ENCODE measurements at regions of chr6 and their contacts with region 1.

Region 1: DNA sequence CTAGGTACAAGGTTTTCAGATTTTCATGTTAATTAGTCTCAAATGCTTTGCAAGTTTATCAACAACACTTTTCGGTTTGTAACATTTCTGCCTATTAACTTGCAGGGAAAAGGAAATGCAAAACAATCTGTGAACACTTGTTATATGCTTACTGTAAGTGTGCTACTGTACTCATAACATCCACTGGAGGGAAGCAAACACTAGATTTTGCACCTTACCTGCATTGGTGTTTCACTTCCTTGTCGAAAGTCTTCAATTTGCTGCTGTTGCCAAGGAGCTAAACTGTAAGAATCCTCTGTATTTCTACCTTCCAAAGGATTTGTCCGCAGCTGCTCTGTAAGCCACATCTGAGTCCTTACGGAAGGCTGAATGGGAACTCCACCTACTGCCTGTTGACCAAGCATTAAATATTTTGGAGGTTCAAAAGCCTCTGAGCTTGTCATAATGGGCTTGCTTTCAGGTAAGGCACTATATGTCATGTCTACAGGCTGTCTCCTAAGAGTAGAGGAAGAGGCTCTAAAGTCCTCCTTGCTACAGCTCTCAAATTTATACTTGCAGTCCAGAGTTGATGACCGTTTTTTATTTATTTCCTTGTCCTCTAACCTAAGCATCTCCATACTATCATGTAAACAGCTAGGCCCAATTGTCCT is 17.3 kb downstream of the PLN start:
- DNase-seq: peak; percentile 39
- ATAC-seq: peak; percentile 82
- H3K4me3 ChIP-seq: no peak overlapping the region
- H3K27ac ChIP-seq: no peak overlapping the region
- H3K4me1 ChIP-seq: no peaks in the 10 kb centered on the region
- H3K27me3 ChIP-seq: no peaks in the 10 kb centered on the region
- CTCF ChIP-seq: peak; percentile 63

Region 2: DNA sequence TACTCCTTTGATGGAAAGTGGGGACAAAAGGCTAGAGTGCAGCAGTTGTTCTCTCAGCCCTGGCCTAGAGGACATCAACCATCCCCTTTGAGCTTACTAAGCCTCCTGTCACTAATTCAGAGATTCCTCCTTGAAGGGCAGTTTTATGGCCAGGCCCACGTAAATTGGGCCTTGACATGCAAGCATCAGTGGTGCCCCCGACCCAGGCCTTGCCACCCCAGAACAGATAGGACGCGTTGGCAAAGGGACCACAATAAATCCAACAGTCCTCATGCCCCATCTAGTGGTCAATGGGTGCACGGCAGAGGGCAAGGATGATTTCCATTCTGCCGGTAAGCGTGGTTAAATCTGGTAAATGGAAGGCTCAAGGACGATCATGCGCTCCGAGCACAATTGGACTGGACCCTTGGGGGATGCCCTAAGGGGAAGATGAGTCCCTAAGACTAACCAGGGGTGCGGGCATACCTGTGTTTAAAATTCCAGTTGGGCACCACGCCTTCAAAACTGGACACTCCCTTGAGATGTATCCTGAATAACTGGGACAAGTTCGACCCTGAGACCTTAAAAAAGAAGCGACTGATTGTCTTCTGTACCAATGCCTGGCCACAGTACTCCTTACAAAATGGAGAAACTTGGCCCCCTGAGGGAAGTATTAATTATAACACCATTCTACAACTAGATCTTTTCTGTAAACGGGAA is 53.4 kb after region 1 on chr6:
- CTCF ChIA-PET with region 1: interaction called, 3 read pairs
- POLR2A ChIA-PET with region 1: no interaction called
- in situ Hi-C with region 1: no loop called
- intact Hi-C with region 1: loop called (anchors 5 kb)
- DNase-seq: peak; percentile 63
- ATAC-seq: peak; percentile 92
- H3K4me3 ChIP-seq: peak overlapping the region in 1 of 2 experiments; percentile 12; a peak in 1 of 4 replicates
- H3K27ac ChIP-seq: no peak overlapping the region
- H3K4me1 ChIP-seq: no peaks in the 10 kb centered on the region
- H3K27me3 ChIP-seq: no peaks in the 10 kb centered on the region
- CTCF ChIP-seq: peak; percentile 97

Region 3: DNA sequence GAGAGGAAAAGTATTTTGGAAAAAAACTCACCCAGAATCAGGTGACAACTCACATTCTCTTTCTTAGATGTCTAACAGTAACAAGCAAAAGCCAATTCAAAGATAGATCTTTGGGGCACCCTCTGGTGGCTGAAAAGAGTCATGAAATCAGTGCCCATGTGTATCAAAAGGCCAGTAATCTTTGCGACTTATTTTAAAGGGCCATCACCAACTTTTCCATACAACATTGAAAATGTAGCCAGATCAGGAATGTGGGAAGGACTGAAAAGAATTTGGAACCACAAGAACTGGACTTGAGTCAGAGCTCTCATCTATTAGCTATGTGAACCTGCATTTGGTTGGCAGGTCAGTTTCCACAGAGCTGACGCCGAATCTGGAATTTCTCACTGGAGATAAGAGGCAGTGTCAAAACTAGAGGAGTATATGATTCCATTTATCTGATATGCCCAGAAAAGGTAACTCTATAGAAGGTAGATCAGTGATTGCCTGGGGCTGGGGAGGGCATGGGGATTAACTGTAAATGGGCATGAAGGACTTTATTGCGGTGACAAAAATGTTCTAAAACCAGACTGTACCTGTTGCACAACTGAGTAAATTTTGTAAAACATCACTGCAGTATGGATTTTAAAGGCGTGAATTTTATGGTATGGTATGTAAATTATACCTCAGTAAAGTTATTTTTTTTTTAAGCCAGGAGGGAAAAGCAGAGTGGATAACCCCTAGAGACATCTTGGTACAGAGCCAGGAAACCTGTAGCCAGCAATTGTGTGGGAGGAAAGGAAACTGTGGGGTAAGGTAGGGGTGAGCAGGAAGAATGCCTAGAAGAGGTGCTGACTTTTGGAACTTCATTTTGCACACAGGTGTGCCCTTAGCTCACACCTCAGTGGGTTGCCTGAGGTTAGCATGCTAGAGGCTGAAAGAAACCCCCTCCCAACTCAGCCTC is 211.4 kb after region 1 on chr6:
- CTCF ChIA-PET with region 1: no interaction called
- POLR2A ChIA-PET with region 1: no interaction called
- in situ Hi-C with region 1: no loop called
- intact Hi-C with region 1: loop called (anchors 1 kb)
- DNase-seq: peak; percentile 75
- ATAC-seq: peak; percentile 88
- H3K4me3 ChIP-seq: no peak overlapping the region
- H3K27ac ChIP-seq: no peak overlapping the region
- H3K4me1 ChIP-seq: no peaks in the 10 kb centered on the region
- H3K27me3 ChIP-seq: peaks cover 8% of the 10 kb centered on the region; the same call in 1 of the 2 replicates
- CTCF ChIP-seq: peak; percentile 86

Region 4: GRCh38 chr6:118800394-118801071 is 235.1 kb after region 1 on chr6:
- CTCF ChIA-PET with region 1: no interaction called
- POLR2A ChIA-PET with region 1: no interaction called
- in situ Hi-C with region 1: no loop called
- intact Hi-C with region 1: loop called (anchors 5 kb)
- DNase-seq: peak; percentile 71
- ATAC-seq: peak; percentile 97
- H3K4me3 ChIP-seq: peak overlapping the region; percentile 7 to 36; a peak in 2 of 4 replicates
- H3K27ac ChIP-seq: no peak overlapping the region
- H3K4me1 ChIP-seq: no peaks in the 10 kb centered on the region
- H3K27me3 ChIP-seq: no peaks in the 10 kb centered on the region
- CTCF ChIP-seq: peak; percentile 96

Measured in Panc1 (cell line).